Endothelial cell of umbilical vein (primary cell): ENCODE measurements at regions of chr11 and their contacts with region 1.

Region 1: DNA sequence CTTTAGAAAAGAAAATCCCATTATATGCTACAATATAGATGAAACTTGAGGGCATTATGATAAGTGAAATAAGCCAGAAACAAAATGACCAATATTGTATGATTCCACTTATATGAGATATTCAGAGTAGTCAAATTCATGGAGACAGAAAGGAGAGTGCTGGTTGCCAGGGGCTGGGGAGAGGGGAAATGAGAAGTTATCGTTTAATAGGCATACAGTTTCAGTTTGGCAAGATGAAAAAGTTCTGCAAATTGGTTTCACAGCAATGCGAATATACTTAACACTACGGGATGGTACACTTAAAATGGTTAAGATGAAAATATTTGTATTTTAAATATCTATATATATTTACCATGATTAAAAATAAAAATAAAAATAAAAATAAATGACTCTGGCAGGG is 31.1 kb upstream of the RDX start:
- DNase-seq: no peak
- H3K4me3 ChIP-seq: no peak overlapping the region
- H3K27ac ChIP-seq: no peak overlapping the region
- H3K4me1 ChIP-seq: peaks cover 17% of the 10 kb centered on the region
- H3K27me3 ChIP-seq: no peaks in the 10 kb centered on the region
- CTCF ChIP-seq: no peak
- POLR2A ChIP-seq: no peak

Region 2: DNA sequence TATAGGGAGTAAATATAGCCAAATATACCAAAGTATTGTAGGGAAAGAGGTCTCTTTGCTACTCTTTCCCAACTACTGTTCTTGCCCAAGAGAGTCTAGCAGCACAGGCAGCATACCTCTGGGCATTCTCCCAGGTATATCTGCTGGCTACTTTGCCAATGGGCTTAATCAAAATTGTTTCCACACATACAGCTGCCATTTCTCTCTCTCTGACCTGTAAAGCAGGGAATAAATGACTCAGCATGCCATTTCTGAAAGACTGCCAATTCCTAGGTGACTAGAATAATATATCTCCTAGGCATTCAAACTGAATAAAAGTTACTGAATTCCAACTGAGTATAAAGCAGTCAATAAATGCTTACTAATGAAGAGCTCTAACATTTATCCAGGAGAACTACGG is 75.7 kb before region 1 on chr11:
- CTCF ChIA-PET with region 1: no interaction called
- POLR2A ChIA-PET with region 1: no interaction called
- dilution Hi-C with region 1: no loop called
- intact Hi-C with region 1: loop called (anchors 2 kb)
- DNase-seq: peak; percentile 90
- H3K4me3 ChIP-seq: no peak overlapping the region
- H3K27ac ChIP-seq: peak overlapping the region; percentile 24
- H3K4me1 ChIP-seq: peaks cover 24% of the 10 kb centered on the region
- H3K27me3 ChIP-seq: no peaks in the 10 kb centered on the region
- CTCF ChIP-seq: no peak
- POLR2A ChIP-seq: no peak

Region 3: DNA sequence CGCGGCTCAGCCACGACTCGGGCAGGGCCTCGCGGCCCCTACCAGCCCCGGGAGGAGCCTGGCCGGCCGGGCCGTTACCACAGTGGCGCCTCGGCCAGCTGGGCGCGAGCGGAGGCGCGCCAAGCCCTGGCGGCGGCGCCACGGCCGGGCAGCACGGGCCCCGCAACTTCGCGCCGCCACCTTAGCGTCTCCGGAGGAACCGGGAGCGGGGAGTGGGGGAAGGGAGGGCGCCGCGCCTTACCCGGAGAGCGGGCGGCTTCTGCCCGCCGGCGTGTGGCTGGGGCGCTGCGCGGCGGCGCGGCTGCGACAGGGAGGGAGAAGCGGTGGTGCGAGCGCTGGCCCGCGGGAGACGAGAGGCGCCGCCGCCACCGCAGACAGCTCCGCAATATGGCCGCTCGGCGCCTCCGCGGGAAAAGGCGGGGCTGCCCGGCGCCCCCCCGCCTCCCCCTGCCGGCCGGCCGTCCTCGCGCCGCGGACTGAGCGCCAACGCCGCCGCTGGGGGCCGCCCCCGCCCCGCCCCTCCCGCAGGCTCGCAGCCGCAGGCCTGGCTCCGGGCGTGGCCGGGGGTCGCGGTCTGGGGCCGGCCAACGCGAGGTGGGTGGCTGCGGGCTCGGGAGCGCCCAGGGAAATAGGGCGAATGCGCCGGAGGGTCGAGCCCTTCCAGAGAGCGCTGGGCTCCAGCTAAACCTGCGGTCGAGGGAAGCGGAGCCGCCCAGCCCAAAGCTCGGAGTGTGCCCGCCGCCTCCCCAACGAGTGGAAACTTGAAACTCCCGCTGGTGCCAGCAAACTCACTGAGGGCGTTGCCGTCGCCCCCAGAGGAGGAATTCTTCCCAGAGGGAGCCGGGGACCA is 31.1 kb before region 1 on chr11 and contains the start of gene RDX:
- CTCF ChIA-PET with region 1: interaction called, 10 read pairs
- POLR2A ChIA-PET with region 1: interaction called, 4 read pairs
- dilution Hi-C with region 1: no loop called
- intact Hi-C with region 1: loop called (anchors 1 kb)
- DNase-seq: peak; percentile 78
- H3K4me3 ChIP-seq: peak within 1 kb of the TSS; percentile 94 to 96 (median 95)
- H3K27ac ChIP-seq: peak within 1 kb of the TSS; percentile 96
- H3K4me1 ChIP-seq: peaks cover 31% of the 10 kb centered on the region
- H3K27me3 ChIP-seq: no peaks in the 10 kb centered on the region
- CTCF ChIP-seq: peak in 1 of 2 donors; percentile 1
- POLR2A ChIP-seq: peak; percentile 75
- total RNA-seq, gene RDX: 239 and 280 TPM in 2 replicates

Region 4: DNA sequence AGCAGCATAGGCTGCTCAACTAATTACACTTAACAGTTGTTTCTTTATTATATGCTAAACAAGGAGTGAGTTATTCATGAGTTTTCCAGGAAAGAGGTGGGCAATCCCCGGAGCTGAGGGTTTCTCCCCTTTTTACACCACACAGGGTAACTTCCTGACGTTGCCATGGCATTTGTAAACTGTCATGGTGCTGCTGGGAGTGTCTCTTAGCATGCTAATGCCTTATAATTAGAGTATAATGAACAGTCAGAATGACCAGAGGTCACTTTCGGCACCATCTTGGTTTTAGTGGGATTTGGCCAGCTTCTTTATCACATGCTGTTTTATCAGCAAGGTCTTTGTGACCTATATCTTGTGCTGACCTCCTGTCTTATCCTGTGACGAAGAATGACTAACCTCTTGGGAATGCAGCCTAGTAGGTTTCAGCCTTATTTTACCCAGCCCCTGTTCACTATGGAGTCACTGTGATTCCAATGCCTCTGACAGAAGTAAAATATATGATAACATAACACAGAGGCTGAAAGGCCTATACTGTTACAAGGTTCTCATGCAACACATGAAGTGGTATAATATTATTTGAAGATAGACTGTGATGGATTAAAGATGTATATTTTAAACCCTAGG is 10.2 kb after region 1 on chr11:
- CTCF ChIA-PET with region 1: interaction called, 3 read pairs
- POLR2A ChIA-PET with region 1: no interaction called
- dilution Hi-C with region 1: no loop called
- intact Hi-C with region 1: loop called (anchors 1 kb)
- DNase-seq: peak; percentile 73
- H3K4me3 ChIP-seq: no peak overlapping the region
- H3K27ac ChIP-seq: peak overlapping the region; percentile 34
- H3K4me1 ChIP-seq: peaks cover 10% of the 10 kb centered on the region
- H3K27me3 ChIP-seq: no peaks in the 10 kb centered on the region
- CTCF ChIP-seq: no peak
- POLR2A ChIP-seq: no peak

Region 5: GRCh38 chr11:110490886-110491285 is 163.4 kb after region 1 on chr11:
- CTCF ChIA-PET with region 1: no interaction called
- POLR2A ChIA-PET with region 1: no interaction called
- dilution Hi-C with region 1: no loop called
- intact Hi-C with region 1: no loop called
- DNase-seq: no peak
- H3K4me3 ChIP-seq: no peak overlapping the region
- H3K27ac ChIP-seq: no peak overlapping the region
- H3K4me1 ChIP-seq: no peaks in the 10 kb centered on the region
- H3K27me3 ChIP-seq: peaks cover 0 to 2% of the 10 kb centered on the region in 2 experiments
- CTCF ChIP-seq: no peak
- POLR2A ChIP-seq: no peak

Region 6: GRCh38 chr11:110812086-110812733 is 484.7 kb after region 1 on chr11:
- CTCF ChIA-PET with region 1: no interaction called
- POLR2A ChIA-PET with region 1: no interaction called
- dilution Hi-C with region 1: no loop called
- intact Hi-C with region 1: no loop called
- DNase-seq: no peak
- H3K4me3 ChIP-seq: no peak overlapping the region
- H3K27ac ChIP-seq: no peak overlapping the region
- H3K4me1 ChIP-seq: no peaks in the 10 kb centered on the region
- H3K27me3 ChIP-seq: no peaks in the 10 kb centered on the region
- CTCF ChIP-seq: no peak
- POLR2A ChIP-seq: no peak